Activated naive CD4-positive, alpha-beta T cell treated with anti-CD3 and anti-CD28 coated beads for 36 hours (primary cell): ENCODE measurements at regions of chr14 and their contacts with region 1.

Region 1: DNA sequence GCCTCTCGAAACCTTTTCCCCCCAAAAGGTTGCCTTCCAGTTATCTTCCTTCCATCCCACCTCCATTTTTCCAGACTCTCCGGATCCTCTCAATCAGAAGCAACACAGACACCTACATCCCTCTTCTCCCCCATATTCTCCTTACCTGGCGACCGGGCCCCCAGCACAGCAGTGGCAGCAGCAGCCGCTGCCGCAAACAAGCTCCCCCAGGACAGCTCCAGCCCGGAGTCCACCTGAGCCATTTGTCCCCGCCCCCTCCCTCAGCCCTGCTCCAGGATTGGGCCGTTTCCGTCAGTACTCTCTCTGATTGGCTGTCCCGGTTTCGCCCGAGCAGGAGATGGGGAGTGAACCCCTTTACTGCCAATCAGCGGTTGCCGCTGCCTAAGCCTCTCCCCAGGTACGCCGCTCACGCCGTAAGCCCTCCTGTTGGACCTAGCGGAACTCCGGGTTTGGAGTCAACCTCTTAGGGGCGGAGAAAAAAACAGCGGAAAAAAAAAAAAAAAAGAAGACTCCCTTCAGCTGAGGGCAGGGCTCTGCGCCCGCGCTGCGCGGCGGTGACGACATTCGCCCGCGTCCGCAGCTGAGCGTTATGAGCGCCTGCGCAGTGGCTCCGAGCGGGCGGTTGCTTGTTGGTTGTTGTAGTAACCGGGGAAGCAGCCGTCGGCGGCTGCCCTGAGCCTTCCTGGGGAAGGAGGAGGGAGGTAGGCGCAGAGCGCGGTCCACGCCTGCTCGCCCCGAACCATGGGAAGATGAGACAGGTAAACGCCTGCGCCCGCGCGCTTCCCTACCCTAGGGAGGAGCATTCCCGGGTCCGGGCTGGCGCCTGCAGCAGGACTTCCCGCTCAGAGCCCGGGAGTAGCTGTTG is at the starts of genes ERG28 and TTLL5:
- DNase-seq: peak; percentile 98
- H3K4me3 Mint-ChIP-seq: peak within 1 kb of the TSS; percentile 100
- H3K27ac Mint-ChIP-seq: peak within 1 kb of the TSS; percentile 98
- H3K4me1 Mint-ChIP-seq: peaks cover 18% of the 10 kb centered on the region
- H3K27me3 Mint-ChIP-seq: no peaks in the 10 kb centered on the region
- total RNA-seq, gene ERG28: 25.6 to 25.7 TPM
- total RNA-seq, gene TTLL5: 23.8 to 25.1 TPM

Region 2: DNA sequence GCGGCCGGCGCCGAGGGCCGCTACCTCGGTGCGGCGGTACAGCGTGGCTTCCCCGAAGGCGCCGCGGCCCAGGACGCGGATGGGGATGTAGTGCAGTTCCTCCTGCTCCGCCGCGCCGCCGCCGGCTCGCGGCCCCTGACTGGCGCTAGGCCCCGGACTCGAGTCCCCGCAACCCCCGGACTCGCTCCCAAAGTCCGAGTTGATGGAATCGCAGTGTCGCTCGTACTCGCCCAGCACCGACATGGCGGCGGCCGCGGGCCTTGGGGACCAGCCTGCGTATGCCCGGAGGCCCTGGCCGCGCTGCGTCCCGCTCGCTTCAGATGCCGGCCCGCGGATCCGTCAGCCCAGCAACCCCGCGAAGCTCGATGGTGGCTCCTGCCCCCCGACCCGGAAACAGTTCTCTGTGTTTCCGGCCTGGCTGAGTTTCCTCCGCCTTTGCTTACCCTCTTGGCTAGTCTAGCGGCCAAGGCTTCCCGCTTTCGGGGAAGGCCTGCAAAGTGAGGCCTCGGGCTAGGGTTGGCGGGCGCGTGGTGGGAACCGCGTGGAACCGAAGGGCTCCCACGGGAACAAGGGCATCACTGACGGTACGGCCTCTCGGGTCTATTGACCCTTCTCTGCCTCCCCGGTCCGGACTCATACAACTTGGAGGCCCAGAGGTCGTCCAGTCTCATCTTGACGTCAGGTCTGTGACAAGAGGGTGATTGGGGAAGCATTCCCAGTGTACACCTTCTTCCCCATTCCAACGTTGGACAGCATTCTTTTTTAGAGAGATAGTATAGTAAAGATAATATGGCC is 534.0 kb before region 1 on chr14 and contains the start of gene NEK9:
- CTCF ChIA-PET with region 1: no interaction called
- intact Hi-C with region 1: loop called (anchors 1 kb)
- DNase-seq: peak; percentile 92
- H3K4me3 Mint-ChIP-seq: peak within 1 kb of the TSS; percentile 96
- H3K27ac Mint-ChIP-seq: peak within 1 kb of the TSS; percentile 97
- H3K4me1 Mint-ChIP-seq: peaks cover 40% of the 10 kb centered on the region
- H3K27me3 Mint-ChIP-seq: no peaks in the 10 kb centered on the region
- total RNA-seq, gene NEK9: 53.5 to 55.6 TPM

Region 3: GRCh38 chr14:75427482-75428229 is 233.2 kb before region 1 on chr14 and contains the start of gene JDP2:
- CTCF ChIA-PET with region 1: no interaction called
- intact Hi-C with region 1: loop called (anchors 2 kb)
- DNase-seq: peak; percentile 53
- H3K4me3 Mint-ChIP-seq: peak within 1 kb of the TSS; percentile 73
- H3K27ac Mint-ChIP-seq: no peak within 1 kb of the TSS
- H3K4me1 Mint-ChIP-seq: peaks cover 17% of the 10 kb centered on the region
- H3K27me3 Mint-ChIP-seq: peaks cover 15% of the 10 kb centered on the region
- total RNA-seq, gene JDP2: 2.8 to 3.2 TPM

Region 4: GRCh38 chr14:75522224-75522982 is 138.5 kb before region 1 on chr14 and contains the start of gene BATF:
- CTCF ChIA-PET with region 1: interaction called, 3 read pairs
- intact Hi-C with region 1: loop called (anchors 1 kb)
- DNase-seq: peak; percentile 91
- H3K4me3 Mint-ChIP-seq: peak within 1 kb of the TSS; percentile 99
- H3K27ac Mint-ChIP-seq: peak within 1 kb of the TSS; percentile 100
- H3K4me1 Mint-ChIP-seq: peaks cover 61% of the 10 kb centered on the region
- H3K27me3 Mint-ChIP-seq: no peaks in the 10 kb centered on the region
- total RNA-seq, gene BATF: 178 to 179 TPM

Region 5: GRCh38 chr14:75577729-75578101 is 83.1 kb before region 1 on chr14:
- CTCF ChIA-PET with region 1: interaction called, 255 read pairs
- intact Hi-C with region 1: no loop called
- DNase-seq: peak; percentile 88
- H3K4me3 Mint-ChIP-seq: peak overlapping the region; percentile 82
- H3K27ac Mint-ChIP-seq: peak overlapping the region; percentile 78
- H3K4me1 Mint-ChIP-seq: peaks cover 22% of the 10 kb centered on the region
- H3K27me3 Mint-ChIP-seq: no peaks in the 10 kb centered on the region

Region 6: GRCh38 chr14:75591331-75591946 is 69.4 kb before region 1 on chr14:
- CTCF ChIA-PET with region 1: no interaction called
- intact Hi-C with region 1: no loop called
- DNase-seq: no peak
- H3K4me3 Mint-ChIP-seq: no peak overlapping the region
- H3K27ac Mint-ChIP-seq: no peak overlapping the region
- H3K4me1 Mint-ChIP-seq: no peaks in the 10 kb centered on the region
- H3K27me3 Mint-ChIP-seq: no peaks in the 10 kb centered on the region

Region 7: GRCh38 chr14:75648066-75648838 is 12.6 kb before region 1 on chr14:
- CTCF ChIA-PET with region 1: no interaction called
- intact Hi-C with region 1: no loop called
- DNase-seq: no peak
- H3K4me3 Mint-ChIP-seq: no peak overlapping the region
- H3K27ac Mint-ChIP-seq: no peak overlapping the region
- H3K4me1 Mint-ChIP-seq: no peaks in the 10 kb centered on the region
- H3K27me3 Mint-ChIP-seq: no peaks in the 10 kb centered on the region

Region 8: DNA sequence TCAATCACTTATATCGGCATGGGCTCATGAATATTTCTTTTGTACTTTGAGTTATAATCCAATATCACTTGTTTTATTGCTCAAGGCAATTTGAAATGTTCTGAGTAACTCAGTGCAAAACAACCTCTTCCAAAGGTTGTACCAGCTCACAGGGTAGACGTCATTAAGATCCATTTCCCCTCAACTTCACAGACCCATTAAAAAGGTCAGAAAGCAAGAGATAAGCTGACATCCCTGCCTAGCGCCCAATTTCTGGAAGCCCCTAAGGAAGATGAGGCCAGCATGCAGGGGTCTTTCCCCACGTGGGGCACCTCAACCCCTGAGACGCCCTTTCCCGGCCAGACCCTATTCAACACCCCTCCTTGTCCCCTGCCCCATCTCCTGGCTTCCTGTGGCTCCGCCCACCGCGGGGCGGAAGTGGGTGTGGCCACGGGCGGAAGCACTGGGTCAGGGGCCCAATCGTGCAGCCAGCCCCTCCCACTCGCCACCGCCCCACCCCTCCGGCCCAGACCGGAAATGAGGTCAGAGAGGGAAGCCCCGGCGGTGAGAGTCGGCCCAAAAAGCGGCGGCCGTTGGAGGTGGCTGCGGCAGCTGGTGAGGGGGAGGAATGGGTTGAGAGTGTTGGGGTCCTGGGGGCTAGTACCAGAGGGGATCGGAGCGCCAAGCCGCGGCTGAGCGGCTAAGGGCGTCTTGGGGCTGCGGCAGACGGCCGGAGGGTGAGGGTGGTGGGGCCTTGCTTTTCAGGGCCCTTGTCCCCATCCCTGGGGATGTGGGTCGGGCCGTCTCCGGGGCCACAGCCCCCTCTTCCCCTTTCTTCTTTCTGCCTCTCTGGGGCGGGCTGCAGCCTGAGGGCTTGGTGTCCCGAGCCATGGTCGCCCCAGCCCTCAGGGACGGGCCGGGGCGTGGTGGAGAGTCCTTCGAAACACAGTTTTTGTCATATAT is 490.8 kb after region 1 on chr14 and contains the start of gene GPATCH2L:
- CTCF ChIA-PET with region 1: interaction called, 3 read pairs
- intact Hi-C with region 1: loop called (anchors 5 kb)
- DNase-seq: peak; percentile 99
- H3K4me3 Mint-ChIP-seq: peak within 1 kb of the TSS; percentile 98
- H3K27ac Mint-ChIP-seq: peak within 1 kb of the TSS; percentile 97
- H3K4me1 Mint-ChIP-seq: peaks cover 48% of the 10 kb centered on the region
- H3K27me3 Mint-ChIP-seq: no peaks in the 10 kb centered on the region
- total RNA-seq, gene GPATCH2L: 40.0 to 43.4 TPM